Activated B cell treated with CpG ODN at 0.5 μM for 24 hours (primary cell): ENCODE measurements at regions of chr1 and their contacts with region 1.

Region 1: GRCh38 chr1:110068646-110069403 is 1.6 kb downstream of the ALX3 start:
- DNase-seq: peak; percentile 40
- ATAC-seq: peak; percentile 29
- H3K4me3 Mint-ChIP-seq: peak overlapping the region; percentile 76
- H3K27ac Mint-ChIP-seq: no peak overlapping the region
- H3K4me1 Mint-ChIP-seq: peaks cover 23% of the 10 kb centered on the region
- H3K27me3 Mint-ChIP-seq: peaks cover 43% of the 10 kb centered on the region
- CTCF ChIP-seq: no peak

Region 2: DNA sequence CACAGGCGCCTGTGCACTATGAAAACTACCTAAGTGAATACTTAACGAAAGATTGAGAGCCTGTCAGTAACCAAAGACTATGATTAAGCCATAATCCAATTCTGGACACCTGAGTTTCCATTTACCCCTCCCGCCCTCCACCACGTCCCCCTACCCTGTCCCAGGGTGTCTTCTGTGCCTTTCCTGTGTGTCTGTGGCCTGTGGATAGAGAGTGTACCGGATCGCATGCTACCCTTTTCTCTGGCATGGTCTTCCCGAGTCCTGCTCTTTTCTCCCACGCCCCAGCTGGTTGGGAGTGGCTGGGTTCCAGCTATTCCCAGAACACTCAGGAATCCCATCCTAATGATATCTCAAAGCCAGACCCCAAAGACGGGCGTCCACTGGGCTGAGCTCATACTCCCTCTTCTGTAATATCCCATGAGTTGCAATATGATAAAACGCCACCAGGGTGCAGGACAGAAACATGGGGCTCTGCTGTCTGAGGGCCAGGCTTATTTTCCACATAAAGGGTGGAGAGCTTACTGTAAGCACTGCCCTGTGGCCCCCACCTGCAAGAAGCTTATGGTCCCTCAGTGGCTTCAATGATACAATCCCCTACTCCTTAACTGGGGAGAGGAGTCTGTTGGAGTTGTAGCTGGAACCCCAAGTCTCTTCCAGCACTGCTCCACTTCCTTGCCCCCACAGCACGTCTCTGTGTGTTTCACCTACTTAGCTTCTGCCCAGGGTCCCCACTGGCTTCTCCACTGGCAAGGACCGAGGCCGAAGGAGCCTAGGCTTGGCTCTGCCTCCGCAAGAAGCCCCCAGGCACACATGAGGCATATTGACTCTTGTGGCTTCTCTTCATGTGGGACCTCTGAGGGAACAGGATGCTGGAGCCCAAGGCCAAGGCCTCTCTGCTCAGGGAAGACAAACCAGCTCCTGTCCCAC is 19.2 kb after region 1 on chr1:
- CTCF ChIA-PET with region 1: interaction called, 4 read pairs
- POLR2A ChIA-PET with region 1: interaction called, 3 read pairs
- intact Hi-C with region 1: loop called (anchors 1 kb)
- DNase-seq: no peak
- ATAC-seq: peak; percentile 75
- H3K4me3 Mint-ChIP-seq: no peak overlapping the region
- H3K27ac Mint-ChIP-seq: no peak overlapping the region
- H3K4me1 Mint-ChIP-seq: peaks cover 9% of the 10 kb centered on the region
- H3K27me3 Mint-ChIP-seq: peaks cover 21% of the 10 kb centered on the region
- CTCF ChIP-seq: no peak